ENCODE measurements at regions of chr20 and their contacts with region 1.

Region 1: GRCh38 chr20:728248-728944 is 39.9 kb downstream of the SLC52A3 start:
- DNase-seq: peak; percentile 29 to 95 (median 64)

Region 2: GRCh38 chr20:431012-431904 is 297.1 kb before region 1 on chr20:
- intact Hi-C with region 1: no loop called
- DNase-seq: peak; percentile 69 to 97 (median 84)

Region 3: GRCh38 chr20:675453-676314 is 52.7 kb before region 1 on chr20 and contains the start of gene SCRT2:
- intact Hi-C with region 1: loop called (anchors 5 kb)
- DNase-seq: peak; percentile 58 to 93 (median 68)